ENCODE measurements at regions of chr2 and their contacts with region 1.

Region 1: DNA sequence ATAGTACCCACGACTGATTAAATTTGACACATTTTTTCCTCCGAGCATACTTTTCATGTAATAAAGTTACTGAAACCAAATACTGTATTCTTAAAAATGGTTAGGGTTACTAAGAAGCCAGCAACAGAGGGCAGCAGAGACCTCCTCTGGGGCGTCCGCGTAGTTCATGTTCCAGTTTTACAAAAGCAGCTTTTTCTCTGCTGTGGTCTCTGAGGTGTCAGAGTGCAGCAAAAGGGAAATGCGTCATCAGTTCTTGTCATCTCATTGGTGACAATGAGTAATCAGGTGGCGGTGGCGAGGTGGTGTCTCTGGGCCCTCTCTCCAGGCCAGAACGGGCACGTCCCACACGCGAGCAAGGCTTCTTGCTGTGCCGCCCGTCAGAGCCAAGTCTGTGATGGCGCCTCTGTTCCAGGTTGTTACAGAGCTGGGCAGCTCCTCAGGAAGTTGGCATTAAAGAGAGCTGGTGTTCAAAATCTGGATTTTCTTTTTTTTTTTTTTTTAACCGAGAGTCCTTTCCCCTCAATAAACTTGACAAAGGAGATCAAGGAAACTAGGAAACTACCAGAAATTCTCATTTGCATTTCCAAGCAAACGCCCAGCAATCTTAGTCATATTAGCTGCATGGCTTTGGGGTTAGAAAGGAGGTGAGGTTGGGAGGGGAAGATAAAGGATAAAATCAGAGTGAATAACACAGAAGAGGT is 98.6 kb upstream of the BZW1 start:
- DNase-seq: peak; percentile 81 to 90 (median 89)
- ATAC-seq: peak; percentile 91 to 99 (median 98)
- H3K4me3 ChIP-seq: peak overlapping the region in 10 of 12 donors; percentile 26 to 58 (median 46)
- H3K27ac ChIP-seq: peak overlapping the region in 11 of 12 donors; percentile 23 to 84 (median 61)
- H3K4me1 ChIP-seq: peaks cover 0 to 7% (median 1%) of the 10 kb centered on the region in 12 donors
- H3K27me3 ChIP-seq: peaks cover 0 to 3% (median 0%) of the 10 kb centered on the region in 9 donors
- CTCF ChIP-seq: peak; percentile 60 to 92 (median 84)
- POLR2A ChIP-seq: peak in 1 of 2 donors; percentile 48

Region 2: DNA sequence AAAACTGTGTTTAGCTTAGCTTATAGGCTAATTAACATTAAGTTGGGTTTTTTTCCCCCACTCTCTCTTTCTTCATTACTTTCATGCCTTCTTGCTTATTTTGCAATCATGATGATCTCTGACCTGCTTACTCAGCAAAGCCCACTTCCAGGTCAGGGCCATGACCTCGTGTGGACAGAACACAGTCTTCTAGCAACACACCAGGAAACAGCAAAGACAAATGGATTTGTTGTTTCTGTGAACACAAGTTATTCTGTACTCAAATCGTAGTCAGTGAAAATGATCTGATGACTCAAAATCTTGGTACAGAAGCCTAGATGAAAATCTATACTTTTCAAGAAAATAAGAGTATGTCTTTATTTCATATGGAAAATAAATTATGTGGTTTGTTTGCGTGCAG is 346.0 kb before region 1 on chr2:
- intact Hi-C with region 1: no loop called
- DNase-seq: no peak
- ATAC-seq: no peak
- H3K4me3 ChIP-seq: no peak overlapping the region
- H3K27ac ChIP-seq: no peak overlapping the region
- H3K4me1 ChIP-seq: peaks cover 0 to 11% (median 0%) of the 10 kb centered on the region in 12 donors
- H3K27me3 ChIP-seq: no peaks in the 10 kb centered on the region
- CTCF ChIP-seq: no peak
- POLR2A ChIP-seq: no peak

Region 3: DNA sequence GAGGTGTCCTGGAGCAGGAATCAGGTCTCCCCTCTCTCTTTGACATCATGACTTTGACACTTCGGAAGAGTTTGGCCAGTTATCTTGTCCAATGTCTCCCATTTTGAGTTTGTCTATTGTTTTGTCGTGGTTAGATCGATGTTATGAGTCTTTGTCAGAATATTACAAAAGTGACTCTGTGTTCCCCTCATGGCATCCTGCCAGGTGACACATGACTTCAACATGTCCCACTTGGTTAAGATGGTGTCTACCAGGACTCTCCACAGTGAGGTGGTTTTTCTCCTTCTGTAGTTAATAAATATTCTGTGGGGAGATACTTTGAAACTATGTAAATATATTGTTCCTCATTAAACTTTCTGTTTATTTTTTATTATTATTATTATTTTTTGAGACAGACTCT is 21.9 kb after region 1 on chr2:
- intact Hi-C with region 1: loop called in 2 of 10 experiments (anchors 1 to 2 kb)
- DNase-seq: no peak
- ATAC-seq: no peak
- H3K4me3 ChIP-seq: no peak overlapping the region
- H3K27ac ChIP-seq: no peak overlapping the region
- H3K4me1 ChIP-seq: peaks cover 0 to 12% (median 0%) of the 10 kb centered on the region in 12 donors
- H3K27me3 ChIP-seq: peaks cover 0 to 9% (median 0%) of the 10 kb centered on the region in 9 donors
- CTCF ChIP-seq: no peak
- POLR2A ChIP-seq: no peak

Region 4: DNA sequence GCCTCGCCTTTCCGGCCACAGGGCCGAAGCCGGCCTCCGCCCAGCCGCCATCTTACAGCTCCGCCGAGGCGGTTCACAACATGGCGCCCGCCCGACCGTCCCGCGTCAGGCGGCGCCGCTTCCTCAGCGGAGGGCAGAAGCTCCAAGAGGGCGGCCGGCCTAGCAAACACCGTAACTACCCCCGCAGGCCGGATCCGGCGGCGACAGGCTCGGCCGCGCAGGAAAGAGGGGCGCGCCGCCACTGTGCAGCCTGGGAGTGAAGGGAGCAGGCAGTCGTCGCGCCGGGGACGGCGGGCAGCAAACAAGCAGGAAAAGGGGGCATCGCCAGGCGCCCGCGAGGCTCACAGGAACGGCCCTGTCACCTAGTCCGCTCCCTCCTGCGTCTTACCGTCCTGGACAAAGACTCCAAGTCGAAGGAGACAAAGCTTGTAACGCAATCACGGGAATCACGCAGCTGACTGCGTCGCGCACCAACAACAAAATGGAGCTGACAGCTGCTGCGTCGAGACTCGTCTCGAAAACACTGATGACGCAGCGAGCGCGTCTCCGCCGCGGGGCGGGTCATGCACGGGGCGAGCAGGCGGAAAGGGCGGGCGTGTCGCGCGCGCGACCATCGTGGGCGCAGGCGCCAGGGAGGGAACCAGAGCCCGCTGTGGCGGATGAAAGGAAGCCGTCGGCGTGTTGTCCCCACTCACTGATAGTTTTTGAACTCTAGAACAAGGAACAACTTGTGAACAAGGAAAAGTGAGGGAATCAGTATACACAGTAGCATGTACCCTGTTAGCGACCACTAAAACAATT is 151.2 kb after region 1 on chr2 and contains the start of gene CLK1:
- intact Hi-C with region 1: loop called in 2 of 10 experiments (anchors 5 to 10 kb)
- DNase-seq: peak; percentile 97 to 99 (median 98)
- ATAC-seq: peak; percentile 88 to 95 (median 94)
- H3K4me3 ChIP-seq: peak within 1 kb of the TSS; percentile 67 to 100 (median 96)
- H3K27ac ChIP-seq: peak within 1 kb of the TSS; percentile 98 to 100 (median 100)
- H3K4me1 ChIP-seq: peaks cover 0 to 52% (median 25%) of the 10 kb centered on the region in 12 donors
- H3K27me3 ChIP-seq: no peaks in the 10 kb centered on the region
- CTCF ChIP-seq: no peak
- POLR2A ChIP-seq: peak; percentile 87 to 99
- total RNA-seq, gene CLK1: 28.6 to 59.5 (median 39.0) TPM

Region 5: GRCh38 chr2:200888704-200889625 is 175.8 kb after region 1 on chr2 and contains the starts of genes NIF3L1 and PPIL3:
- intact Hi-C with region 1: loop called in 3 of 10 experiments (anchors 2 to 10 kb)
- DNase-seq: peak; percentile 95 to 97 (median 97)
- ATAC-seq: peak; percentile 96 to 98 (median 97)
- H3K4me3 ChIP-seq: peak within 1 kb of the TSS; percentile 57 to 89 (median 72)
- H3K27ac ChIP-seq: peak within 1 kb of the TSS; percentile 65 to 97 (median 92)
- H3K4me1 ChIP-seq: peaks cover 0 to 30% (median 13%) of the 10 kb centered on the region in 12 donors
- H3K27me3 ChIP-seq: no peaks in the 10 kb centered on the region
- CTCF ChIP-seq: no peak
- POLR2A ChIP-seq: peak in 1 of 2 donors; percentile 48
- total RNA-seq, gene NIF3L1: 16.6 to 27.1 (median 21.6) TPM
- total RNA-seq, gene PPIL3: 11.3 to 27.7 (median 22.2) TPM